Activated CD4-positive, alpha-beta T cell treated with anti-CD3 and anti-CD28 coated beads for 36 hours (primary cell): ENCODE measurements at regions of chr14 and their contacts with region 1.

Region 1: GRCh38 chr14:73472185-73473114 is 14.1 kb upstream of the NUMB start:
- DNase-seq: no peak
- ATAC-seq: peak; percentile 32
- H3K4me3 Mint-ChIP-seq: no peak overlapping the region
- H3K27ac Mint-ChIP-seq: no peak overlapping the region
- H3K4me1 Mint-ChIP-seq: peaks cover 15% of the 10 kb centered on the region
- H3K27me3 Mint-ChIP-seq: no peaks in the 10 kb centered on the region

Region 2: GRCh38 chr14:73173092-73173735 is 299.2 kb before region 1 on chr14:
- CTCF ChIA-PET with region 1: interaction called, 11 read pairs
- POLR2A ChIA-PET with region 1: no interaction called
- intact Hi-C with region 1: loop called (anchors 1 kb)
- DNase-seq: peak; percentile 7
- ATAC-seq: no peak
- H3K4me3 Mint-ChIP-seq: no peak overlapping the region
- H3K27ac Mint-ChIP-seq: no peak overlapping the region
- H3K4me1 Mint-ChIP-seq: no peaks in the 10 kb centered on the region
- H3K27me3 Mint-ChIP-seq: no peaks in the 10 kb centered on the region

Region 3: GRCh38 chr14:73239393-73240241 is 232.8 kb before region 1 on chr14:
- CTCF ChIA-PET with region 1: interaction called, 3 read pairs
- POLR2A ChIA-PET with region 1: no interaction called
- intact Hi-C with region 1: loop called in 1 of 2 experiments (anchors 5 kb)
- DNase-seq: no peak
- ATAC-seq: no peak
- H3K4me3 Mint-ChIP-seq: no peak overlapping the region
- H3K27ac Mint-ChIP-seq: no peak overlapping the region
- H3K4me1 Mint-ChIP-seq: peaks cover 11% of the 10 kb centered on the region
- H3K27me3 Mint-ChIP-seq: peaks cover 64% of the 10 kb centered on the region